MCF 10A (cell line): ENCODE measurements at regions of chr10 and their contacts with region 1.

Region 1: GRCh38 chr10:90007226-90007625 is 305.8 kb downstream of the KIF20B start:
- DNase-seq: peak; percentile 71
- H3K4me3 Mint-ChIP-seq: no peak overlapping the region
- H3K27ac Mint-ChIP-seq: peak overlapping the region; percentile 57
- H3K4me1 Mint-ChIP-seq: peaks cover 7% of the 10 kb centered on the region
- H3K27me3 Mint-ChIP-seq: no peaks in the 10 kb centered on the region
- CTCF ChIP-seq: no peak

Region 2: DNA sequence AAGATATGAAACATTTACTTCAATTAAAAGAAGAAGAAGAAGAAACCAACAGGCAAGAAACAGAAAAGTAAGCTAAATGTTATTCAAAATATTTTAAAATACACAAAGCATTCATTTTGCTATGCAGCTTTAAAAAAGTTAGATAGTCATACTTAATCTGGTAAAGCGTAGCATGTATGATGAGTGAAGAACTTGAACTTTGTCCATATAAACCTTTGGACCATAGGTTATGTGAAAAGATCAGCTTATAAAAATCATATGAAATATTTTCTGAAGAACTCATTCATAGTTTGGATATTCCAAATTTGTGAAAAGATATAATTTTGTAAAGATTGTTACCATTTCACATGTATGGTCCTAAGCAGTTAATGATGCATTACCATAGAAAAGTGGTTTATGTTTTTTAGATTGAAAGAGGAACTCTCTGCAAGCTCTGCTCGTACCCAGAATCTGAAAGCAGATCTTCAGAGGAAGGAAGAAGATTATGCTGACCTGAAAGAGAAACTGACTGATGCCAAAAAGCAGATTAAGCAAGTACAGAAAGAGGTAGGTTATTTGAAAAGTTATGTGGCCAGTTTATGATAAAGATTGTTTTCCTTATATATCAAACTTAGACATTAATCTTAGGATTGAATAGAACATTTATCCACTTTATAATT is 268.5 kb before region 1 on chr10:
- CTCF ChIA-PET with region 1: no interaction called
- POLR2A ChIA-PET with region 1: no interaction called
- intact Hi-C with region 1: no loop called
- DNase-seq: no peak
- H3K4me3 Mint-ChIP-seq: no peak overlapping the region
- H3K27ac Mint-ChIP-seq: no peak overlapping the region
- H3K4me1 Mint-ChIP-seq: peaks cover 4% of the 10 kb centered on the region
- H3K27me3 Mint-ChIP-seq: no peaks in the 10 kb centered on the region
- CTCF ChIP-seq: no peak

Region 3: DNA sequence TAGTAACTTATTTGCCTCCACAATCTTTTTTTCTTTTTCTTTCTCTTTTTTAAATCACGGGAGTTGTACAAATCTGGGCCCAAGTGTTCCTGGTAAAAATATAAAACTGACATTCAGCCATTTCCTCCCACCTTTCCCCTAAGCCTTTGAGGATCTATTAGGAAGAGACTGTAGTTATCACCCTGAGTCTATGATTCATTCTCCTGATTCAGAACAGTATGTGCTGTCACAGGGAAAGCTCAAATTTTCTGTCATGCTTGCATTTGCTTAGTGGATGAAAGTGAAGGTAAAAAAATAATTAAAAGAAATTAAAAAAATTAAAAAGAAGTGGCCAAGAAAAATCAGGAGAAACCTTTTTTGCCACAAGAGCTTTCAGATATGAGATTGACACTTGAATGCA is 234.1 kb before region 1 on chr10:
- CTCF ChIA-PET with region 1: no interaction called
- POLR2A ChIA-PET with region 1: no interaction called
- intact Hi-C with region 1: no loop called
- DNase-seq: no peak
- H3K4me3 Mint-ChIP-seq: no peak overlapping the region
- H3K27ac Mint-ChIP-seq: peak overlapping the region; percentile 29
- H3K4me1 Mint-ChIP-seq: peaks cover 17% of the 10 kb centered on the region
- H3K27me3 Mint-ChIP-seq: no peaks in the 10 kb centered on the region
- CTCF ChIP-seq: no peak

Region 4: DNA sequence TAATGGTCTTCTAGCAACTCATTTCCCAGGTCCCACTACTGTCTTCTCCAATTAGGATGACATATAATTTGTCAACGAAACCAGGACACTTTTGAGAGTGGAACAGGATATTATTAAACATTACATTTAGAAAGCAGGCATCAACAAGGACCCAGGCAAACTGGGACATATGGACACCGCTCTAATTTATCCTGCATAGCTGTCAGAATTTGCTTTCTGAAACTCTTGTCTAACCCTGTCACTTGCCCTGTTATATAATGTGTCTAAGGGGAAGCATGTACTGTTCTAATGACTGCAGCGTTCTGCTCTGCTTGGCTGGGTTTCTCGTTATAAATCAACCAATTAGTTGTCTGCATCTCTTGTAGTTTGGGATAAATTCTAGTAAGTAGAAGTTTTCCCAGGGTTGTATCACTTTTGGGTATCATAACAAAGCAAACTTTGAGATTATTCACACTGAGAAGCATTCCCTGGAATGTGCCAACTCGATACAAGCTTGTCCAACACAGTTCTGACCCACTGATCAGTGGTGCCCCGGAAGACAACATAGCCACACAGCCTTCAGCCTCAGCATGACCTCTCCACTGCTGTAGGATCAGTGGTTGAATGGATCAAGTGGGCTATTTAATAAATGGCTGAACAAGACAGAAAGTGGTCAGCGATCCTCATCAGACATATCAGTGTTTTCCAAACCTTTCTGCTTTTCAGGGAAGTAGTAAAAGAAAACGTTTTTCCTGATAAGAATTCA is 77.8 kb before region 1 on chr10:
- CTCF ChIA-PET with region 1: no interaction called
- POLR2A ChIA-PET with region 1: no interaction called
- intact Hi-C with region 1: no loop called
- DNase-seq: no peak
- H3K4me3 Mint-ChIP-seq: no peak overlapping the region
- H3K27ac Mint-ChIP-seq: no peak overlapping the region
- H3K4me1 Mint-ChIP-seq: peaks cover 7% of the 10 kb centered on the region
- H3K27me3 Mint-ChIP-seq: no peaks in the 10 kb centered on the region
- CTCF ChIP-seq: no peak

Region 5: DNA sequence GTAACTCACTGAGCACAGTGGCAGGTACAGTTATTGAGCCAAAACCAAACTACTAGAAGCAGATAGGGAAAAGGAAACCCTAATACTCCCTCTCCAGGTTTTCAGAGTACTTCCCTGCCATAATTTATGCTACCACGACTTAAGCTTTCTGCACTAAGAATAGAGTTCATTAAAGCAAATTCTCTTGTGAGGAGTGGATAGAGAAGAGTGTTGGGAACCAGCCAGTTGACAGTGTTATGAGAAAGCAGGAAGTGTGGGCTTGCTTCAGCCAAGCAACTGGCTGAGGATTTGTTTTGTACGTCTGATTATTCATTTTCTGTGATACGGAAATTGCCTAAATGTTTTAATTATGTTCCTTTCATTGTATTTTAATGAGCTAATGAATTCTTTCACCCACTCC is 25.3 kb before region 1 on chr10:
- CTCF ChIA-PET with region 1: no interaction called
- POLR2A ChIA-PET with region 1: no interaction called
- intact Hi-C with region 1: no loop called
- DNase-seq: peak; percentile 4
- H3K4me3 Mint-ChIP-seq: no peak overlapping the region
- H3K27ac Mint-ChIP-seq: no peak overlapping the region
- H3K4me1 Mint-ChIP-seq: no peaks in the 10 kb centered on the region
- H3K27me3 Mint-ChIP-seq: no peaks in the 10 kb centered on the region
- CTCF ChIP-seq: no peak

Region 6: DNA sequence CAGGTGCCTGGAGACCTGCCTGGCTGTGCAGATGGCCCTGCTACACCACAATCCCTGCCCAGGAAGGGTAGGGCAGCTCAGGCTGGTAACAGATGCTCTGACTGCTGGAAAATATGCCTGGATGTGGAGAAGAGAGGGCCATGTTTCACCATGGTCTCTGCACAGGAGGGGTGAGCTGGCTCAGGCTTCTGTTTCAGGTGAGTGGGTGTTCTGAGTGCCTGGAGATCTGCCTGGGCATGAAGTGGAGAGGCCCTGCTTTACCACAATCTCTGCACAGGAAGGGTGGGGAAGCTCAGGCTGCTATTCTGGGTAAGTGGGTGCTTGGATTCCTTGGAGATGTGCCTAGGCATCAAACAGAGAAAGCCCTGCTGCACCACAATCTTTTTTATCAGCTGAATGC is 44.2 kb after region 1 on chr10:
- CTCF ChIA-PET with region 1: no interaction called
- POLR2A ChIA-PET with region 1: interaction called, 12 read pairs
- intact Hi-C with region 1: no loop called
- DNase-seq: peak; percentile 87
- H3K4me3 Mint-ChIP-seq: peak overlapping the region; percentile 64
- H3K27ac Mint-ChIP-seq: peak overlapping the region; percentile 95
- H3K4me1 Mint-ChIP-seq: peaks cover 33% of the 10 kb centered on the region
- H3K27me3 Mint-ChIP-seq: no peaks in the 10 kb centered on the region
- CTCF ChIP-seq: no peak